ENCODE measurements at regions of chr9 and their contacts with region 1.

Region 1: GRCh38 chr9:101468116-101468515 is 32.5 kb upstream of the ALDOB start:
- DNase-seq: no peak

Region 2: DNA sequence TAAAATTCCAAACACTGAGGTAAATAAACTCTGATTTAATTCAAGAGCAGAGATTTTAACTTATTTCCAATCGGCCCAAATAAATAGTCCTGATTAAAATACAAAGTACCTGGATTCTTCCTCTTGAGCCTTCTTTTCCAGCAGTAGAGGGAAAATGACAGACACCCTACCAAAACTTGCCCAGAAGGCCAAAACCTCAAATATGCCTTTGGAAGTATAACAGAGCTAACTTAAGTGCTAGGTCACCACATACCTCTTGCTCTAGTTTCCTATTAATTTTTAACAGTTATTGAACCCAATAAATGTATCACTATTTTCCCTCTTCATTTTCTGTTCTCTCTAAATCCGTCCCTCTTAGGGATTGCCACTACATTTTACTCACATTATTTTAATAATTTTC is 84.8 kb before region 1 on chr9:
- CTCF ChIA-PET with region 1: no interaction called
- POLR2A ChIA-PET with region 1: no interaction called
- DNase-seq: no peak

Region 3: GRCh38 chr9:101427957-101428655 is 40.0 kb before region 1 on chr9:
- CTCF ChIA-PET with region 1: no interaction called
- POLR2A ChIA-PET with region 1: no interaction called
- DNase-seq: no peak

Region 4: GRCh38 chr9:101449140-101449721 is 18.9 kb before region 1 on chr9:
- CTCF ChIA-PET with region 1: interaction called, 10 read pairs
- POLR2A ChIA-PET with region 1: no interaction called
- DNase-seq: peak; percentile 87

Region 5: DNA sequence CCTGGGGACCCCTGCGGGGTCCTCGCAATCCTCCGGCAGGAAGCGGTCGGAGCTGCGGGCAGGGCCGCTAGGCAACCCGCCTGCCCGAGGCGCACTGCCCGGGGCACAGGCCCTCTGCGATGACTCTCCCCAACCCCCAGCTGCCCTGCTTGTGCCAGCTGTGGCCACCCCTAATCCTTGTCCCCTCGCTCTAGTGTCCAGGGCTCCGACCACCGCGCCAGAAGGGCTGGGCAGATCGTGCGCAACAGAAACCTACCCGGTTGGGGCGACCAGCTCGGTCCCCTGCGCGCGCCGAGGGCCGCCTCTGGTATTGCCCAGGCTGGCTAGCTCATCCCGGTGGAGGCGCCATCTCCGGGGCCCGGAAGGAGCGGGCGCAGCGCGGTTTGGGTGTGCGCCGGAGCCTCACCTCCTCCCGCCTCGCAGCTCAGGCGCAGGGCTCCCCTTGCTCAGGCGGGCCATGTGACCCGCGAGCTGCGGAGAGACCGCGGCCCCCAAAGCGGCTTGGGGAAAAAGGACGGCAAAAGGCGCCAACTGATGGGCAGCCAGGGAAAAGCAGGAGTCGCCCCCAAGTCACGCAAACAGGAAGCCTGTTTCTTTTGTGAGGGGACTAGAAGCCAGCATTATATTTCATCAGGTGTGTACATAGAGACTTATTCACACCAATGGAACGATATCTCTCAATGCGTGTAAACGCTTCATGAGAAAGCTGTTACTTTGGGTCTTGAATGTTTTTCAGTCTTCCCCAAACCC is 18.8 kb after region 1 on chr9:
- CTCF ChIA-PET with region 1: interaction called, 11 read pairs
- POLR2A ChIA-PET with region 1: interaction called, 5 read pairs
- DNase-seq: peak; percentile 54